Activated T-helper 2 cell treated with anti-CD3 and anti-CD28 coated beads, Interferon-gamma antibody, Interleukin-2, Interleukin-4, amounts not matched to agents 10 μg/mL and 5 μg/mL and 100 μg/mL, durations not matched to agents 14 hours and 24 hours and 36 hours (primary cell): ENCODE measurements at regions of chr20 and their contacts with region 1.

Region 1: DNA sequence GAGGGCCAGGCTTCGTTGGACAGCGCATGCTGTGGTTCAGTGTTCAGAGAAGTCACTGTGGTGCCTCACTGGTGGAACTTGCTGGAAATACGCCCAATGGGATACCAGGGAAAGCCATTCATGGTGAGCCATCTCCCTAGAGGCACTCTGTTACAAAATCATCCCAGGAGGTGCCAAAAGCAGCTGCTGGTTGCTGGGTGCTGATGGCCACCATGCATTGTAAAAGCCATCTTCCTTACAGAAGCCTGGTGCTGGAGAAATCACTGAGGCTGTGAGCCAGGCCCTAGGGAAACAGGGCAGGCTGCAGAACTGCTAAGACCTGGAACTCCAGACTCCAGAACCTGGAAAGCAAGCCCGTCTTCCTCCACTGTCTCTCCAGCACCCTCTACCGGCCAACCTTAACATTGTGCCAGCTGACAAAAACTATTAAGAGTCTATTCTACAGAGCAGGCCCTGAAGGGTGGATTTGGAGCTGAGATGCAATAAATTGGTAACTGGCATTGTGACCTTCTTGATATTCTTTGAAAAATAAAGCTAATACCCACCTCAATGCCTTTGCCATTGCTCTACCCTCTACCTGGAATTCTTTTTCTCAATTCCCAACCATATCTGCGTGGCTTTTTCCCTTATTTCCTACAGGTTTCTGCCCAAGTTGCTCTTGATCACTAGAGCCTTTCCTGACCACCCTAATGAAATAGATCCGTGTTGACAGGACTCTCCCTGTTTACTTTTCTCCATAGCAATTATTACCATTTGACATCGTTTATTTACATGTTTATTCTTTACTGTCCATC is 18.5 kb downstream of the SNRPB start:
- DNase-seq: peak; percentile 50
- H3K4me3 Mint-ChIP-seq: no peak overlapping the region
- H3K27ac Mint-ChIP-seq: no peak overlapping the region
- H3K4me1 Mint-ChIP-seq: peaks cover 29% of the 10 kb centered on the region
- H3K27me3 Mint-ChIP-seq: no peaks in the 10 kb centered on the region

Region 2: DNA sequence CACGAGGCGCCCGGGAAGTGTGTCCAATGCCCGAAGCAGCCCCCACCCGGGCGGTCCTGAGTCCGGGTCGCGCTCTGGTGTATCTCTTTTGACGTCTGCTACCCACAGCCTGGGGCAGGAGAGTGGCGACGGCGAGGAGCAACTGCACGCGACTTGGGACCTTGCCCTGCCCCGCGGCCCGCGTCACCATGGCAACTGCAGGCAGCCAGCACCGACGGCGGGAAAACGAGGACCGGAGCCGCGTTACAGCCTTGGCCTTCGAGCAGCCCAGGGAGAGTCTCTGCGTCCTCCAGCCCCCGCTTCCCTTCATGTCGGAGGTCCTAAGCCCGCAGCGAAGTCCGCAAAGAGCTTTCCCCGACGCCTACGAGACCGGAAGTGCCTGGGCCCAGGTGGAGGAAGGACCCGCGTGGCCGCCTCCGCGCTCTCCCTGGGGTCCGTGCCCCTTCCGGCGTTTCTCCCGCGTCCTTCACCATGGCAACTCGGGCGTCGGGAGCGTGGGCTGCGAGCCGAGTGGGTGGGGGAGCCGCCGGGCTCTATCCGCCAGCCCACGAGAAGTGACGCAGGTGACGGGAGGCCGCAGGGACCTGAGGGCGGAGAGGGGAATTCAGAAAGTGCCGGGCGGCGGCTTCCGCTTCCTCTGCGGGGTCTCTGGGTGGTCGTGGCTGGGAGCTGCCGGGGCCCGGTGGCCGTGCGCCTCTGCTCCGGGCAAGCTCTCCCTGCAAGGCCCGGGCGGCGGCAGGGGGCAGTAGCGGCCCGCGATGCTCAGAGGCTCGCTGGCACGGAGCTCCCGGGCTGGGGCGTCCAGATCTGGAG is 245.0 kb before region 1 on chr20:
- intact Hi-C with region 1: loop called (anchors 5 kb)
- DNase-seq: peak; percentile 45
- H3K4me3 Mint-ChIP-seq: peak overlapping the region; percentile 72
- H3K27ac Mint-ChIP-seq: peak overlapping the region; percentile 20
- H3K4me1 Mint-ChIP-seq: peaks cover 4% of the 10 kb centered on the region
- H3K27me3 Mint-ChIP-seq: peaks cover 12% of the 10 kb centered on the region

Region 3: GRCh38 chr20:2350606-2351005 is 101.5 kb before region 1 on chr20:
- intact Hi-C with region 1: loop called (anchors 1 kb)
- DNase-seq: no peak
- H3K4me3 Mint-ChIP-seq: no peak overlapping the region
- H3K27ac Mint-ChIP-seq: no peak overlapping the region
- H3K4me1 Mint-ChIP-seq: peaks cover 1% of the 10 kb centered on the region
- H3K27me3 Mint-ChIP-seq: peaks cover 37% of the 10 kb centered on the region

Region 4: DNA sequence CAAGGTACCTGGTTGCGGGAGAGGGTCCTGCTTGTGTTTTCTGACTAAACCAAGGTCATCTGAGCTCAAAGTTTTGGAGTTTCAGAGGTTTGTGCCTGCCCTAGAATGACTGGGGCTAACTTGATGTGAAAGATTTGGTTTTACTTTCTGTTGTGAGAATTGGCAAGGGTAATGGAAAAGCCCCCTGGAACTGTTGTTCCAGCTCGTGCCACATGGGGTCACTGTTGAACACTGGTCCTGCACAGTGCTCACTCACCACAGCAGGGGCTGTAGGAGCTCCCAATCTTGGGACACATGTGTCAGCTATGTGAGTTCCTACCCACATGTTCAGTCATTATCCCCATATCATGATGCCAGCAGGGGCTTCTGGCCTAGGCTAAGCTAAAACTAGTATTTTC is 65.0 kb before region 1 on chr20:
- intact Hi-C with region 1: loop called (anchors 1 kb)
- DNase-seq: peak; percentile 66
- H3K4me3 Mint-ChIP-seq: peak overlapping the region; percentile 28
- H3K27ac Mint-ChIP-seq: no peak overlapping the region
- H3K4me1 Mint-ChIP-seq: peaks cover 7% of the 10 kb centered on the region
- H3K27me3 Mint-ChIP-seq: peaks cover 18% of the 10 kb centered on the region